Adrenal gland (tissue), 19 donors: ENCODE measurements at regions of chr14 and their contacts with region 1.

Region 1: DNA sequence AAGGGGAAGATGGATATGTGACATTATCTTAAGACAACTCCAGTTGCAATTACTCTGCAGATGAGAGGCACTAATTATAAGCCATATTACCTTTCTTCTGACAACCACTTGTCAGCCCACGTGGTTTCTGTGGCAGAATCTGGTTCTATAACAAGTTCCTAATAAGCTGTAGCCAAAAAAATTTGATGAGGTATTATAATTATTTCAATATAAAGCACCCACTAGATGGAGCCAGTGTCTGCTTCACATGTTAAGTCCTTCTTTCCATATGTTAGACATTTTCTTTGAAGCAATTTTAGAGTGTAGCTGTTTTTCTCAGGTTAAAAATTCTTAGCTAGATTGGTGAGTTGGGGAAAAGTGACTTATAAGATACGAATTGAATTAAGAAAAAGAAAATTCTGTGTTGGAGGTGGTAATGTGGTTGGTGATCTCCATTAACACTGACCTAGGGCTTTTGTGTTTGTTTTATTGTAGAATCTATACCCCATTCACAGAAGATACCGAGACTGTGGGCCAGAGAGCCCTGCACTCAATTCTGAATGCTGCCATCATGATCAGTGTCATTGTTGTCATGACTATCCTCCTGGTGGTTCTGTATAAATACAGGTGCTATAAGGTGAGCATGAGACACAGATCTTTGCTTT is 36.9 kb downstream of the PSEN1 start:
- DNase-seq: peak in 1 of 7 donors; percentile 14
- H3K4me3 ChIP-seq: no peak overlapping the region
- H3K27ac ChIP-seq: no peak overlapping the region
- H3K4me1 ChIP-seq: peaks cover 0 to 4% of the 10 kb centered on the region in 2 donors
- H3K27me3 ChIP-seq: no peaks in the 10 kb centered on the region
- CTCF ChIP-seq: peak; percentile 41 to 66 (median 58)
- POLR2A ChIP-seq: no peak

Region 2: DNA sequence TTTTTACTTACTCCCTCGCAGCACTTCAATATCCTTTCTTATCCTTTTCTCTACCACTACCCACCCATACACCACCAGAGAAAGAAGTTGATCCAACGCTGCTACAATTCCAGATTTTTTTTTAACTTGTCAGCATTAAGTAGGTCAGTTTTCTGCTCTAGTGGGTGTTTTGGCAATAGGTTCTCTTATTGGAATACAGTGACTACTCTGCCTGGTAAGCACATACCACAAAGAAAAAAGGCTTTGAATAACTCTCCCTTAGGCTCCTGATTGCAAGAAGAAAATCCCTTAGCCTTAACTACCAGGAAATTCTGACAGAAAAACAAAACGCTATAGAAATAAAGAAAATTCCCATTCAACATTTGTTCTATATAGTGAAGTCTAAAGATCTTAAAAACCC is 213.1 kb after region 1 on chr14:
- intact Hi-C with region 1: no loop called
- DNase-seq: no peak
- H3K4me3 ChIP-seq: no peak overlapping the region
- H3K27ac ChIP-seq: no peak overlapping the region
- H3K4me1 ChIP-seq: no peaks in the 10 kb centered on the region
- H3K27me3 ChIP-seq: no peaks in the 10 kb centered on the region
- CTCF ChIP-seq: no peak
- POLR2A ChIP-seq: no peak

Region 3: DNA sequence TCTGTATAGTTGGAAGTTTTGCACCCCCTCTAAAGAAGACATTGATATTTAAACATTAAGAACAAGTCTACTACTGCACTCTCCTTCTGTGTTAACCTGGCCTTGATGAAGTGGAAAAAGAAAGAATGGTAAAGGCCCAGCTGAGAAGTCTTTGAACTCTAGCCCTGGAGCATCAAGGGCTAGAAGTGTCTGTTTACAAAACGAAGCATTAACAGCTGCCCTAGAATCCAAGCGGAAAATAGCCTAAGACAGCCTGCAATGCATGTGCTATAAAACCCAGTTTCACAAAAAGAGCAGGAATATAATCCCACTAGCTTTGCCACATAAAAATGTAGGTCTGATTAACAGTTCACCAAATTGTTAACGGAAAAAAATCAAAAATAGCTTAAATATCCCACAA is 224.6 kb after region 1 on chr14:
- intact Hi-C with region 1: no loop called
- DNase-seq: no peak
- H3K4me3 ChIP-seq: no peak overlapping the region
- H3K27ac ChIP-seq: no peak overlapping the region
- H3K4me1 ChIP-seq: peaks cover 0 to 13% of the 10 kb centered on the region in 2 donors
- H3K27me3 ChIP-seq: no peaks in the 10 kb centered on the region
- CTCF ChIP-seq: no peak
- POLR2A ChIP-seq: no peak

Region 4: GRCh38 chr14:73472185-73473114 is 299.2 kb after region 1 on chr14:
- intact Hi-C with region 1: loop called in 1 of 2 experiments (anchors 10 kb)
- DNase-seq: no peak
- H3K4me3 ChIP-seq: no peak overlapping the region
- H3K27ac ChIP-seq: no peak overlapping the region
- H3K4me1 ChIP-seq: no peaks in the 10 kb centered on the region
- H3K27me3 ChIP-seq: no peaks in the 10 kb centered on the region
- CTCF ChIP-seq: peak; percentile 63 to 88 (median 78)
- POLR2A ChIP-seq: no peak